Heart right ventricle (tissue), 16 donors: ENCODE measurements at regions of chr7 and their contacts with region 1.

Region 1: GRCh38 chr7:113015032-113015645 is 71.5 kb downstream of the GPR85 start:
- DNase-seq: no peak
- ATAC-seq: no peak
- H3K4me3 ChIP-seq: no peak overlapping the region
- H3K27ac ChIP-seq: no peak overlapping the region
- H3K4me1 ChIP-seq: no peaks in the 10 kb centered on the region
- H3K27me3 ChIP-seq: no peaks in the 10 kb centered on the region
- CTCF ChIP-seq: peak in 7 of 9 donors; percentile 31 to 62 (median 55)

Region 2: GRCh38 chr7:112692333-112692732 is 322.8 kb before region 1 on chr7:
- intact Hi-C with region 1: no loop called
- DNase-seq: peak in 1 of 2 donors; percentile 10
- ATAC-seq: peak in 6 of 8 donors; percentile 67 to 90 (median 76)
- H3K4me3 ChIP-seq: no peak overlapping the region
- H3K27ac ChIP-seq: no peak overlapping the region
- H3K4me1 ChIP-seq: no peaks in the 10 kb centered on the region
- H3K27me3 ChIP-seq: no peaks in the 10 kb centered on the region
- CTCF ChIP-seq: no peak

Region 3: DNA sequence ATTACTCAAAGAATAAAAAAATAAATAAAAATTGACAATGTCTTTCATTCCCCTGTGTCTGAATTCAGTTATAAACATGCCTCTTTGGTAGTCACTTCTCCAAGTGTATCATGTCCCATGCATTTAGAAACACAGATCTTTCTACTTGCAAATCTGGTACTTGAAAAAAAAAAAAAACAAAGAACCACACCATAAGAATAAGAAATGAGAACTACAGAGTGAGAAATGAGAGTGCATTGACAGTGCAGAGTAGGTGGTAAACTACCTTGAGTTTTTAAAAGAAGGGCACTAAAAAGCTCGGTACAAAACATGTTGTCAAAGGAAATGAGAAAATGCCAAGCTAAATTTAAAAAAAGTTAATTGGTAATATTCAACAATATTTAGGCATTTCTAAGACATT is 51.5 kb before region 1 on chr7:
- intact Hi-C with region 1: no loop called
- DNase-seq: no peak
- ATAC-seq: no peak
- H3K4me3 ChIP-seq: no peak overlapping the region
- H3K27ac ChIP-seq: peak overlapping the region in 4 of 10 donors; percentile 14 to 47 (median 26)
- H3K4me1 ChIP-seq: peaks cover 0 to 14% (median 0%) of the 10 kb centered on the region in 9 donors
- H3K27me3 ChIP-seq: no peaks in the 10 kb centered on the region
- CTCF ChIP-seq: no peak

Region 4: DNA sequence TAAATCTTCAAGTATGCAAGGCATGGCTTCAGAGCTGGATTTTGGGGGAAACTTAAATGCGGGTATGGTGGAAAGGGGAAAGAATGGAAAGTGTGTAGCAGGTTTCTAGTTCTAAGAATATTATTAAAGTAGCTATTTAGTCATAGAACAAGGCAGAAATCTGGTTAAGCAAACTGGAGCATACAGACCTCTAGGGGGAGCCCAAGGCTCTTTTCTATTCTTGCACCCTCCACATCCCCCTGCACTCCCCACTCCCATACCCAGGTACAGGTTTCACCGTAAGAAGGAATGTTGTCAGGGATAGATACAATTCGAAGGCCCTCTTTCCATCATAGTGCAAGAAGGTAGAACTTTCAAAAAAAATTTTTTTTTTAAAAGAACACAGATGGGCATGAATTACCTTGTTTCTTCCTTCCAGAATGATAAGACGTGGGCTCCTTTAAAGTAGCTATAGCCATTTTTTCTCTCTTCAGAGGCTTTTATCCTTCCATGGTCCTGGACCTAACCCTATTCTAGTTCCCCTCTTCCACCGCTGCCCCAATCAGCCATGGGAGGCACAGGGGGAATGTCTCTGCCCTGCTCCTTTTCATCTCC is 144.7 kb after region 1 on chr7:
- intact Hi-C with region 1: loop called in 1 of 10 experiments (anchors 10 kb)
- DNase-seq: no peak
- ATAC-seq: no peak
- H3K4me3 ChIP-seq: no peak overlapping the region
- H3K27ac ChIP-seq: no peak overlapping the region
- H3K4me1 ChIP-seq: no peaks in the 10 kb centered on the region
- H3K27me3 ChIP-seq: peaks cover 0 to 5% (median 0%) of the 10 kb centered on the region in 7 donors
- CTCF ChIP-seq: peak; percentile 19 to 65 (median 50)

Region 5: GRCh38 chr7:113289140-113289740 is 274.1 kb after region 1 on chr7:
- intact Hi-C with region 1: loop called in 3 of 10 experiments (anchors 5 to 10 kb)
- DNase-seq: no peak
- ATAC-seq: peak in 5 of 8 donors; percentile 51 to 78 (median 67)
- H3K4me3 ChIP-seq: no peak overlapping the region
- H3K27ac ChIP-seq: no peak overlapping the region
- H3K4me1 ChIP-seq: no peaks in the 10 kb centered on the region
- H3K27me3 ChIP-seq: no peaks in the 10 kb centered on the region
- CTCF ChIP-seq: peak; percentile 5 to 62 (median 44)

Region 6: GRCh38 chr7:113404245-113404644 is 389.1 kb after region 1 on chr7:
- intact Hi-C with region 1: loop called in 1 of 10 experiments (anchors 10 kb)
- DNase-seq: no peak
- ATAC-seq: no peak
- H3K4me3 ChIP-seq: no peak overlapping the region
- H3K27ac ChIP-seq: no peak overlapping the region
- H3K4me1 ChIP-seq: no peaks in the 10 kb centered on the region
- H3K27me3 ChIP-seq: peaks cover 0 to 4% (median 0%) of the 10 kb centered on the region in 7 donors
- CTCF ChIP-seq: peak in 6 of 9 donors; percentile 12 to 45 (median 26)

Region 7: DNA sequence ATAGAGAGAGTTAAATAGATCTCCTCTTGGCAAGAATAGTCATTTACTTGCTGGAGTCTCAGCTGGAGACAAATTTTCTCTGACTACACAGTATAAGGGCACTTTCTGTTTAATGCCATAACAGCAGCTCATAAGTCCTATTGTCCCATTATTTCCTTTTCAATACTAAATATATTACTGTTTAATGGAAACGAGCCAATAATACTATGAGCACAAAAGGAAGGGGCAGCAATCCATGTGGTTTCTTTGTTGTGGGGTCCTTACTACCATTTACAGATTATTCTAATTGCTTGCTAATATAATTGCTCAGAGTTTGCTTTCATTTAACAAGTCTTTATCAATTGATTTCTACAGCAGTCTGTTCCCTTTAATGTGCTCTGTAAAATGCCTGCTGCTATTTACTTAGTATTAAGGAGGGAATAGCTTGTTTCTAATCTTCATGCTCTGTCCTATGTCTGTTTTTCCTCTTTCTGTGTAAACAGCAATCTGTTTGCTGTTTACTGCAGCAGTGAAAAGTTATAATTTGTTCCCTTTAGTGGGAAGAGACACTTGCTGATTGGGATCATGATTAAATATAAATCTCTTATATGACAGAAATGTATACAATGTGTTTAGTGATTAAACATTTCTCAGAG is 399.4 kb after region 1 on chr7:
- intact Hi-C with region 1: loop called in 2 of 10 experiments (anchors 10 kb)
- DNase-seq: no peak
- ATAC-seq: no peak
- H3K4me3 ChIP-seq: no peak overlapping the region
- H3K27ac ChIP-seq: no peak overlapping the region
- H3K4me1 ChIP-seq: no peaks in the 10 kb centered on the region
- H3K27me3 ChIP-seq: no peaks in the 10 kb centered on the region
- CTCF ChIP-seq: no peak

Region 8: GRCh38 chr7:113421696-113422330 is 406.7 kb after region 1 on chr7:
- intact Hi-C with region 1: loop called in 5 of 10 experiments (anchors 2 to 10 kb)
- DNase-seq: peak; percentile 31 to 78
- ATAC-seq: peak; percentile 49 to 90 (median 76)
- H3K4me3 ChIP-seq: no peak overlapping the region
- H3K27ac ChIP-seq: no peak overlapping the region
- H3K4me1 ChIP-seq: peaks cover 0 to 3% (median 0%) of the 10 kb centered on the region in 9 donors
- H3K27me3 ChIP-seq: no peaks in the 10 kb centered on the region
- CTCF ChIP-seq: peak; percentile 29 to 86 (median 80)

Region 9: DNA sequence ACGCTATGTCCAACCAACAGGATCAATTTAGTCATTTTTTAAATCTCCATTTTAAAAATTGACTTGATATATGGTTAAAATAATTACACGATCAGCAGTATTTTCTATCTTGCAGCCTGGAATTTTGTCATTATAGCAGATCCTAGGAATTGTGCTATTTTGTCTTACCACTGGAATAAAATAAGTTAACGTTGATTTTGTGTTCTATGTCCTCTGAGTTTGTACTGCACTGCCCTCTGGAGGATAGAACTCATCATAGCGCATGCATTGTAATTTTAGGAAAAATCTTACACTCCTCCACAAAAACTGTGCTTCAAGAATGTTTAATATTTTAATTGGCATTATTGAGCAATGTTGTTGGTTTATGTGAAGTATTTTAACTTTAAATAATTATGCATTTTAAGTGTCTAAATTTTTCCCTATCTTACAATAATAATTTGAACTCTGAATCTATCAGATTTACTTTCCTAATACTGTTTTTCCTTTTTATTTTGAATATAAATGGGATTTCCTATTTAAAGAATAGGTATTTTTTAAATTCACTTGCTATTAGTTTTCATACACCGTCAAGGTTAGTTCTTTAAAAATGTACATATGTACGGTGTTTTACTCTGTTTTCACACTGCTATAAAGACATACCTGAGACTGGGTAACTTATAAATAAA is 683.5 kb after region 1 on chr7:
- intact Hi-C with region 1: loop called in 1 of 10 experiments (anchors 10 kb)
- DNase-seq: no peak
- ATAC-seq: no peak
- H3K4me3 ChIP-seq: no peak overlapping the region
- H3K27ac ChIP-seq: no peak overlapping the region
- H3K4me1 ChIP-seq: no peaks in the 10 kb centered on the region
- H3K27me3 ChIP-seq: no peaks in the 10 kb centered on the region
- CTCF ChIP-seq: peak; percentile 22 to 70 (median 63)